ENCODE measurements at regions of chr16 and their contacts with region 1.

Region 1: DNA sequence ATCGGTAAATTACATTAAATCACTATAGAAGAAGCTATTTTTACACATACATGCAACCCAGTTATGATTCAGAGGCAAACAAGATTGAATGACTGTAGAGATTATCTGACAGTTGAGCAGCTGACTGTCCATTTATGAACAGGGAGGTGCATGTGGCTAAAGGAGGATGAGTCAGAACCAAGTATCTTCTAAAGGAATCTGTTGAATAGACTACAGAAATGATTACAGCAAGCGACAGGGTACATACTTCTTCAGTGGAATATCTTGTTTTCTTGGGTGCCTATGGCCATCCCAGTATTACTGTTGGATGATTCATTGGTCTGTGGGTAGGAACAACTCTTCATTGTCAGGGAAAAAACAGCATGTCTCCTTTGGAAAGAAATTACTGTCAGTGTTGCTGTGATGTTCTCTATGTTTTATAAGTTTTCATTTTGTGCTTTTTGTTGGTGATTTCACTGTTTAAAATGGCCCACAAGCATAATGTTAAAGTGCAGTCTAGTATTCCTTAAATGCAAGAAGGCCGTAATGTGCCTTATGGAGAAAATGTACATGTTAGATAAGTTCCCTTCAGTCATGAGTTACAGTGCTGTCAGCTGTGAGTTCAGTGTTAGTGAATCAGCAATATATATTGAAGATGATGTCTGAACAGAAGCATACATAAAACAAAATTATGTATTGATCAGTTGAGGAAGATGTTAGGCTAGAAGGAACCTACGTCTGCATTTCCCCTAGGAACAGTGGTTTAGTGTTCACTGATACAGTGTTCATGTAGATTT is 27.0 kb downstream of the CBFB start:
- DNase-seq: peak; percentile 67
- H3K4me3 Mint-ChIP-seq: peak overlapping the region; percentile 78
- H3K27ac Mint-ChIP-seq: peak overlapping the region; percentile 98
- H3K4me1 Mint-ChIP-seq: peaks cover 56% of the 10 kb centered on the region
- H3K27me3 Mint-ChIP-seq: no peaks in the 10 kb centered on the region

Region 2: GRCh38 chr16:66872943-66873684 is 182.8 kb before region 1 on chr16:
- intact Hi-C with region 1: loop called (anchors 10 kb)
- DNase-seq: peak; percentile 97
- H3K4me3 Mint-ChIP-seq: peak overlapping the region; percentile 87
- H3K27ac Mint-ChIP-seq: peak overlapping the region; percentile 94
- H3K4me1 Mint-ChIP-seq: peaks cover 47% of the 10 kb centered on the region
- H3K27me3 Mint-ChIP-seq: no peaks in the 10 kb centered on the region

Region 3: GRCh38 chr16:66984892-66985311 is 71.0 kb before region 1 on chr16:
- intact Hi-C with region 1: loop called (anchors 1 kb)
- DNase-seq: peak; percentile 86
- H3K4me3 Mint-ChIP-seq: peak overlapping the region; percentile 61
- H3K27ac Mint-ChIP-seq: peak overlapping the region; percentile 97
- H3K4me1 Mint-ChIP-seq: peaks cover 57% of the 10 kb centered on the region
- H3K27me3 Mint-ChIP-seq: no peaks in the 10 kb centered on the region

Region 4: GRCh38 chr16:67028555-67029248 is 27.2 kb before region 1 on chr16 and contains the start of gene CBFB:
- intact Hi-C with region 1: loop called (anchors 1 kb)
- DNase-seq: peak; percentile 98
- H3K4me3 Mint-ChIP-seq: peak within 1 kb of the TSS; percentile 96
- H3K27ac Mint-ChIP-seq: peak within 1 kb of the TSS; percentile 95
- H3K4me1 Mint-ChIP-seq: peaks cover 53% of the 10 kb centered on the region
- H3K27me3 Mint-ChIP-seq: no peaks in the 10 kb centered on the region
- total RNA-seq, gene CBFB: 163 and 172 TPM in 2 replicates

Region 5: GRCh38 chr16:67039260-67040020 is 16.5 kb before region 1 on chr16:
- intact Hi-C with region 1: loop called (anchors 2 kb)
- DNase-seq: peak; percentile 43
- H3K4me3 Mint-ChIP-seq: no peak overlapping the region
- H3K27ac Mint-ChIP-seq: peak overlapping the region; percentile 41
- H3K4me1 Mint-ChIP-seq: peaks cover 46% of the 10 kb centered on the region
- H3K27me3 Mint-ChIP-seq: no peaks in the 10 kb centered on the region

Region 6: GRCh38 chr16:67091906-67092566 is 36.1 kb after region 1 on chr16:
- intact Hi-C with region 1: loop called (anchors 2 kb)
- DNase-seq: no peak
- H3K4me3 Mint-ChIP-seq: no peak overlapping the region
- H3K27ac Mint-ChIP-seq: peak overlapping the region; percentile 82
- H3K4me1 Mint-ChIP-seq: peaks cover 10% of the 10 kb centered on the region
- H3K27me3 Mint-ChIP-seq: no peaks in the 10 kb centered on the region

Region 7: DNA sequence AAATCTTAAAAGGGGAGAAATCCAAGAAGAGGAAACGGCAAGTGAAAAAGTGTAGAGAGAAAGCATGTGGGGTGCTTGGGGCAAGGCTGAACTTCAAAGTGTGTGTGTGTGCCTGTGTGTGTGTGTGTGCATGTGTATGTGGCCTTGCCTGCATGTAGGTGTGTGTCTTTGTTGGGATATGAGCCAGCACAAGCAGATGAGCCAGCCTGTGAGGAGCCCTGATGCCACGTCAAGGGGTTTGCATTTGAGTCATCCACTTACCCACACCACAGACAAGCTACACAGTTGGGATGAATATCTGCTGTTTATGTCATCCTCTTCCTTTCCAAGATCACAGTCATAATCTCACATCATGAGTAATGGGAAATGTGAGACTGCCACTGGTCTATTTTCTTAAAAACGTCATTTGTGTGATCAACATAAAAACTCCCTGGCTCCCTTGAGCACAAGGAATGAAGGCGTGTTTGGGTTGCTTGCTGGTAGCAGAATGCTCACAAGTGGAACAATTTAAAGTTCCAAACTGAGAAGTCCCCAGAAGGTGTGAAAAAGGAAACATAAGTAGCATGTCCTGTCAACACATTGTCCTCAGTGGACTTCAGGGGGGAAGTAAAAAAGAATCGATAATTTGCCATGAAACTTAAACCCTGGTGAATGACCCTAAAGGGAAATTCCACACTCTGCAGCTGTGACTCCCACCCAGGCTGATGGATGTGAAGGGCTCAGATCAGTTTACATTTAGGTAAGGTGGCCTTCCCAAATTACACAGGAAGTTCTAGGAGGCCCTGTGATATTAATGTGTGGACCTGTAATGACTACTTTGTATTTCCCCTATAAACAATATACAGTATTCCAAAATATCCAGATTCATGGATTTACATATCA is 255.9 kb after region 1 on chr16:
- intact Hi-C with region 1: loop called (anchors 2 kb)
- DNase-seq: peak; percentile 91
- H3K4me3 Mint-ChIP-seq: peak overlapping the region; percentile 41
- H3K27ac Mint-ChIP-seq: peak overlapping the region; percentile 96
- H3K4me1 Mint-ChIP-seq: peaks cover 39% of the 10 kb centered on the region
- H3K27me3 Mint-ChIP-seq: no peaks in the 10 kb centered on the region

Measured in activated CD4-positive, alpha-beta T cell treated with anti-CD3 and anti-CD28 coated beads, Interleukin-2, amount 10 ng/mL, durations not matched to agents 24 days and 14 days (primary cell).